ENCODE measurements at regions of chr2 and their contacts with region 1.

Region 1: GRCh38 chr2:74529357-74530238 is at the starts of genes AUP1 and HTRA2:
- DNase-seq: peak; percentile 93
- H3K4me3 ChIP-seq: peak within 1 kb of the TSS; percentile 99
- CTCF ChIP-seq: no peak

Region 2: DNA sequence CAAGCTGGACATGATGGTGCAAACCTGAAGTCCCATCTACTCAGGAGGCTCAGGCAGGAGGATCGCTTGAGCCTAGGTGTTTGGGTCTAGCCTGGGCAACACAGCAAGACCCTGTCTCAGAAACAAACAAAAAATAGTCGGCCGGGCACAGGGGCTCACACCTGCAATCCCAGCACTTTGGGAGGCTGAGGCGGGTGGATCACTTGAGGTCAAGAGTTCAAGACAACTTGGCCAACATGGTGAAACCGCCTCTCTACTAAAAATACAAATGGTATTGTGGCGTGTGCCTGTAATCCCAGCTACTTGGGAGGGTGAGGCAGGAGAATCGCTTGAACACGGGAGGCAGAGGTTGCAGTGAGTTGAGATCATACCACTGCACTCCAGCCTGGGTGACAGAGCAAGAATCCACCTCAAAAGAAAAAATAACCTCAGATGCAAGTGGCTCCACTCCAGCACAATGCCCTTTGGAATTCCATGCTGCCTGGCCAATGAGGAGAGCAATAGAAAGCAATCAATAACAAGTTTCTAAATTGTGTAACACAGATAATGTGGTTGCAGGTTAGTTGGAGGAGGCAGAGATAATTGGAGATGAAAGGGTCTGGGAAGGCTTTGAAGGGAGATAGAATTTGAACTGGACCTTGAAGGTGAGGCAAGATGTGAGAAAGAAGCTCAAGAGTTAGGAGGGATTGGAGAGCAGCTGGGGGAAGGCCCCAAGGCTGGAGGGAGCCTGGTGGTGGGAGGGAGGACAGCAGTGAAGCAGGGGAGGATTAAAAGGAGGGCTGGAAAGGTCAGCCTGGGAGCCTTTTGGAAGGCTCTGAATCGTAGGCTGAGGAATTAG is 40.7 kb before region 1 on chr2:
- CTCF ChIA-PET with region 1: interaction called, 38 read pairs
- POLR2A ChIA-PET with region 1: interaction called, 3 read pairs
- DNase-seq: no peak
- H3K4me3 ChIP-seq: no peak overlapping the region
- CTCF ChIP-seq: no peak

Region 3: DNA sequence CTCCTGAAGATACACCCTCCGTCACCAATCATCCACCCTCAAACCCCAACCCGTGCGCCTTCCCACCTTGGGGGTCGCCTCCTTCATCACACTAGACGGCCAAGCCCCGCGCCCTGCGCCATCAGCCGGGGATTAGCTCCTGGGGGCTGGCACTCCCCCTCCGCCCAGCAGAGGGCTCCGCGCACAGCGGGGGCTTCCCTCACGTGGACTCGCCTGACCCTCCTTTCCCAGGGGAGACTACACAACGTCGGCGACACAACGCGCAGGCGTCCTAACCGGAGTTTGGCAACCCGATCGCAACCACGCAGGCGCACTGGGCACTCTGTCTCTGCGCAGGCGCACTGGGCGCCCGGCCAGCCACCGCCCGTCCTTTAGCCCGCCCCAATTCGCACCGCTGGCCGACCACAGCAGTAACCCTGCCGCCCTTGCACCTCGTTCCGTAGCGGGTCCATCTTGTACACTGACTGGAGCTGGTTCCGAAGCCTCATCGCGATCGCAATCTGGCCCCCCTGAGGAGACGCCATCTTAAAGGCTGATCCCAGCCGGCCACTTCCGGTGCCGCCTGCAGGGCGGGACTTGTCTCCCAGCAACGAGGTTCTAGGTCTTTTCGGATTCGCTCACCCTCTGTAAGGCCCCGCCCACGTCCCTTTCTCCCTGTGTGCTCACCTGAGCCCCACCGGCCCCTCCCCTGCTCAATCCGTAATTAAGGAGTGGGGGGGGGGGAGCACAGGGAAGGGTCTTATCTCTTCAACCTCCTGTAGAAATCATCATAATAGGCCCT is 22.3 kb before region 1 on chr2 and contains the start of gene PCGF1:
- CTCF ChIA-PET with region 1: interaction called, 13 read pairs
- POLR2A ChIA-PET with region 1: interaction called, 11 read pairs
- DNase-seq: peak; percentile 87
- H3K4me3 ChIP-seq: peak within 1 kb of the TSS; percentile 100
- CTCF ChIP-seq: peak; percentile 70